ENCODE measurements at regions of chr20 and their contacts with region 1.

Region 1: DNA sequence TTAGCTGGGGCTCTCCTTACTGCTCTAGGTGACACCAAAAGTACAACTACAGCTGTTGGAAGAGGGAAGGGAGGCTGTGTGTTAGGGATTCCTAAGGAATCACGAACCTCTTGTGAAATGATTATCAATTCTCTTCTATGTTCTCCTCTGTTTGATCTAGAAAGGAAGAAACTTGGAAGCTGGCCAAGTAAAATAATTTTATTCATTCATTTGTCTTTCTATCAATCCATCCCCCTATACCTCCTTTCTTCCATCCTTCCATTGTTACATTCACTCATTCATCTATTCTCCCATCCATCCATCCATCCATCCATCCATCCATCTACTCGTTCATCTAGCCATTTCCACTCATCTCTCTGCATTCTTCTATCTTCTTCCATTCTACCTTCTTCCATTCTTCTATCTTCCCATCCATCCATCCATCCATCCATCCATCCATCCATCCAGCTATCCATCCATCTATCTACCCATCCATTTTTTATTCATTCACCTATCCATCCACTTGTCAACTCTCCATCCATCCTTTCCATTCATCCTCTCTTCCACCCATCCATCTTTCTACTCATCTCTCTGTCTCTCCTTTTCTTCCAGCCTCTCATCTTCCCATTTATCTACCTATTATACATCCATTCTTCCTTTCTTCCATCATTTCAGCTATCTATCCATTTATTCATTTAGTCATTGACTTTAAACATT is 52.8 kb upstream of the ZNFX1 start:
- DNase-seq: no peak

Region 2: DNA sequence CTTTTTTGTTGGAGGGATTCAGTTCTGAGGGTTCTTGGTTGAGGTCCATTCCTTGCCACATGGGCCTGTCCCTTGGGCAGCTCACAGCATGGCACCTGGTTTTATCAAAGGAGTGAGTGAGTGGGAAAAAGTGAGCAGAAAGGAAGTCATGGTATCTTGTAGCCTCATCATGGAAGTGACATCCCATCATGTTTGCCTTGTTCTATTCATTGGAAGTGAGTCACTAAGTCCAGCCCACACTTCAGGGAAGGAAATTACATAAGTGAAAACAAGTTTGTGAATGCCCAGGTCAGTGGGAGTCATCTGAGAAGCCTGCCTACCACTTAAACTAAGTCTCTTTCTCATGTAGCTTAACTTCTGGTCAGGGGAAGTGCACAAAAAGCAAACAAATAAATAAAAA is 20.0 kb before region 1 on chr20:
- intact Hi-C with region 1: no loop called
- DNase-seq: no peak

Region 3: DNA sequence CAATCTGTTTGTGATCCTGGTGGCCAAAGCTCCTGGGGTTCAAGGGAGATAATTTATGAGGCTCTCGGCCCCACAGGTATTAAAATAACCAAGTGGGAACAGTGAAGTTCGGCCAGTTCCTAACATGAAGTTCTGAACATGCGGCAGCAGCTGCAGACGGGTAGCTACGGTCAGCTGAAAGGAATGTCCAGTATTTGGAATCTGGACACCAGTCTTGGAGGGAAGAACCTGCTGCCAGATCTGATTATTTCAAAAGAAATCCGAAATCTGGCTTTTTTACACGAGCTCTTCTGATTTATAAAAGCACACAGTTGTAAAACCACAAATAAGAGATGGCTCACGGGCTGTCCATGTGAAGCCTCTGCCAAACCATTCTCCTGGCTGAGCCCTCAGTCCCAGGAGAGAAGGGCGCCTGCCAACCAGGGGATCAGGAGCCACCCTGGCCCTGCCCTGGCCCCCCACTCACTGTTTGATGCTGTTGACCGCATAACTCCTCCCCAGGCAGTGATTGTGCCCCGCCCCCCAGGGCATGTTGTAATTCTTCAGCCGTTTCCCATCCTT is 179.9 kb after region 1 on chr20:
- intact Hi-C with region 1: loop called (anchors 5 kb)
- DNase-seq: no peak

Region 4: GRCh38 chr20:49928401-49929141 is 597.9 kb after region 1 on chr20:
- intact Hi-C with region 1: loop called (anchors 5 kb)
- DNase-seq: peak; percentile 88